Endothelial cell of umbilical vein (primary cell): ENCODE measurements at regions of chr20 and their contacts with region 1.

Region 1: DNA sequence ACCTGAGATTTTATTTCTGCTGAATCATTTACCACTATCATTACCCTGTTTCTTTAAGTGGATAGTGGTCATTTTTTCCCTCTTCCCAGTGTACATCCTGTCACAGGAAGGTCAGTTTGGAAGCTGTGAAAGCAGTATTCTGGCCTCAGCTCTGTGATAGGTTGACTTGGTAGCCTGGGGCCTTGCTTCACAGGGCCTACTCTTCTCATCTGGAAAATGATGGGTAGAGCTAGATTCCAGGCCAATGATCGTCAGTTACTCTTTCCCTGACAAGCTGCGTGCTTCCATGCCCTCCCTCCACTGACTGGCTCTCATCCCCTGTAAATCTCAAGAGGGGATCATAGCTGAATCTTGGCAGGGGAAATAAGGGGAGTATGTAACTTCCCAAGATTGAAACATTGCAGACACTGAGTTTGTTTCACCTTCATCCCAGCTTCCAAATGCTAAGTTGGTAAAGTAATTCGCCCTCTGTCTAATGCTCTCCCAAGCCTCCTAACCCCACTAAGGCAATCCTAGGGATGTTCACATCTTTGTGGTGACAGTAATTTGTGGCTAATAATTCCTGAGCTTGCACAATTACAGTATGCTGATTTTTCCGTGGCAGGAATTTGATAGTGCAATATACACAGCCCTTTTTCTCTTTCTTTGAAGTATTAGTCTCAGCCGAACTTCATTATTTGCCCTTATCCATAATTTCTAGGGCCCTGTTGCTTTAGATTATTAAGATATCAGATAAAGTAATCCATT is 51.2 kb downstream of the VAPB start:
- DNase-seq: peak; percentile 52
- H3K4me3 ChIP-seq: no peak overlapping the region
- H3K27ac ChIP-seq: peak overlapping the region; percentile 45
- H3K4me1 ChIP-seq: peaks cover 19% of the 10 kb centered on the region
- H3K27me3 ChIP-seq: no peaks in the 10 kb centered on the region
- CTCF ChIP-seq: no peak
- POLR2A ChIP-seq: no peak

Region 2: GRCh38 chr20:58402827-58403226 is 37.4 kb before region 1 on chr20:
- CTCF ChIA-PET with region 1: no interaction called
- POLR2A ChIA-PET with region 1: no interaction called
- dilution Hi-C with region 1: no loop called
- intact Hi-C with region 1: loop called (anchors 5 kb)
- DNase-seq: no peak
- H3K4me3 ChIP-seq: no peak overlapping the region
- H3K27ac ChIP-seq: no peak overlapping the region
- H3K4me1 ChIP-seq: peaks cover 14% of the 10 kb centered on the region
- H3K27me3 ChIP-seq: no peaks in the 10 kb centered on the region
- CTCF ChIP-seq: no peak
- POLR2A ChIP-seq: no peak